ENCODE measurements at regions of chr7 and their contacts with region 1.

Region 1: GRCh38 chr7:121081327-121081936 is 92.9 kb downstream of the CPED1 start:
- DNase-seq: peak in 1 of 2 experiments; percentile 65
- H3K4me3 ChIP-seq: no peak overlapping the region
- H3K27ac ChIP-seq: no peak overlapping the region
- H3K4me1 ChIP-seq: peaks cover 42% of the 10 kb centered on the region
- H3K27me3 ChIP-seq: no peaks in the 10 kb centered on the region
- CTCF ChIP-seq: peak; percentile 76

Region 2: GRCh38 chr7:120792091-120792860 is 289.2 kb before region 1 on chr7:
- CTCF ChIA-PET with region 1: no interaction called
- POLR2A ChIA-PET with region 1: no interaction called
- intact Hi-C with region 1: loop called (anchors 1 kb)
- DNase-seq: peak in 1 of 2 experiments; percentile 57
- H3K4me3 ChIP-seq: no peak overlapping the region
- H3K27ac ChIP-seq: no peak overlapping the region
- H3K4me1 ChIP-seq: no peaks in the 10 kb centered on the region
- H3K27me3 ChIP-seq: no peaks in the 10 kb centered on the region
- CTCF ChIP-seq: peak; percentile 85

Region 3: GRCh38 chr7:120857588-120858573 is 223.6 kb before region 1 on chr7 and contains the start of gene TSPAN12:
- CTCF ChIA-PET with region 1: no interaction called
- POLR2A ChIA-PET with region 1: no interaction called
- intact Hi-C with region 1: loop called (anchors 5 kb)
- DNase-seq: peak; percentile 64 to 90
- H3K4me3 ChIP-seq: peak within 1 kb of the TSS; percentile 90
- H3K27ac ChIP-seq: peak within 1 kb of the TSS; percentile 45
- H3K4me1 ChIP-seq: peaks cover 14% of the 10 kb centered on the region
- H3K27me3 ChIP-seq: no peaks in the 10 kb centered on the region
- CTCF ChIP-seq: peak; percentile 64
- total RNA-seq, gene TSPAN12: 5.8 and 6.1 TPM in 2 replicates

Region 4: DNA sequence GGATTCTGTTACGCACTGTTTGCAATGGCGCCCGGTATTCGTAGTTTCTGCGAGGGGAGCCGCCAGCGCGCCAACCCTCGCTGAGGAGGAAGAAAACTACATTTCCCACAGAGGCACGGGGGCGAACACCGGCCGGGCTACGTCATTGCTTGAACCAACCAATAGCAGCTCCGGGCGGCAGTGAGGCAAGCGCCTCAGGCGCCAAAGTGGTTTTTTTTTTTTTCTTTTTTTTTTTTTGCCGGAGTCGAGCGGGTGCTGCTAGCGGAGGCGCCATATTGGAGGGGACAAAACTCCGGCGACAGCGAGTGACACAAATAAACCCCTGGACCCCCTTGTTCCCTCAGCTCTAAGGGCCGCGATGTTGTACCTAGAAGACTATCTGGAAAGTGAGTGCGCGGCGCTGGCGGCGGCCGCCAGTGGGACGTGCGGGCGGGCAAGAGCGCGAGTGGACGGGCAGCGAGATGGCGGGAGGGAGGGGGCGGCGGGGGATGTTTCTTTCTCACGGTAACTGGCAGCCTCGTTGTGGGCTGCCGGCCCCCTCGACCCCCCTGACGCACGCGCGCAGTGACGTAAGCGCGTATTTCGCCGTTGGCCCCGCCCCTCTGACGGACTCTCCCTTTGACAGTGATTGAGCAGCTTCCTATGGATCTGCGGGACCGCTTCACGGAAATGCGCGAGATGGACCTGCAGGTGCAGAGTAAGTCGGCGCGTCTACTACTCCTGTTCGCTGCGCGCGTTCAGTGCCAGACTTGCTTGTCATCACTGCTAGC is 130.7 kb before region 1 on chr7 and contains the start of gene ING3:
- CTCF ChIA-PET with region 1: no interaction called
- POLR2A ChIA-PET with region 1: interaction called, 4 read pairs
- intact Hi-C with region 1: loop called (anchors 2 kb)
- DNase-seq: peak; percentile 95 to 99
- H3K4me3 ChIP-seq: peak within 1 kb of the TSS; percentile 83
- H3K27ac ChIP-seq: peak within 1 kb of the TSS; percentile 93
- H3K4me1 ChIP-seq: peaks cover 24% of the 10 kb centered on the region
- H3K27me3 ChIP-seq: no peaks in the 10 kb centered on the region
- CTCF ChIP-seq: no peak
- total RNA-seq, gene ING3: 10.9 and 16.4 TPM in 2 replicates

Region 5: GRCh38 chr7:120987683-120988590 is 93.5 kb before region 1 on chr7:
- CTCF ChIA-PET with region 1: interaction called, 25 read pairs
- POLR2A ChIA-PET with region 1: no interaction called
- intact Hi-C with region 1: loop called (anchors 1 kb)
- DNase-seq: peak; percentile 74 to 85
- H3K4me3 ChIP-seq: peak overlapping the region; percentile 74
- H3K27ac ChIP-seq: no peak overlapping the region
- H3K4me1 ChIP-seq: peaks cover 10% of the 10 kb centered on the region
- H3K27me3 ChIP-seq: no peaks in the 10 kb centered on the region
- CTCF ChIP-seq: peak; percentile 95

Region 6: DNA sequence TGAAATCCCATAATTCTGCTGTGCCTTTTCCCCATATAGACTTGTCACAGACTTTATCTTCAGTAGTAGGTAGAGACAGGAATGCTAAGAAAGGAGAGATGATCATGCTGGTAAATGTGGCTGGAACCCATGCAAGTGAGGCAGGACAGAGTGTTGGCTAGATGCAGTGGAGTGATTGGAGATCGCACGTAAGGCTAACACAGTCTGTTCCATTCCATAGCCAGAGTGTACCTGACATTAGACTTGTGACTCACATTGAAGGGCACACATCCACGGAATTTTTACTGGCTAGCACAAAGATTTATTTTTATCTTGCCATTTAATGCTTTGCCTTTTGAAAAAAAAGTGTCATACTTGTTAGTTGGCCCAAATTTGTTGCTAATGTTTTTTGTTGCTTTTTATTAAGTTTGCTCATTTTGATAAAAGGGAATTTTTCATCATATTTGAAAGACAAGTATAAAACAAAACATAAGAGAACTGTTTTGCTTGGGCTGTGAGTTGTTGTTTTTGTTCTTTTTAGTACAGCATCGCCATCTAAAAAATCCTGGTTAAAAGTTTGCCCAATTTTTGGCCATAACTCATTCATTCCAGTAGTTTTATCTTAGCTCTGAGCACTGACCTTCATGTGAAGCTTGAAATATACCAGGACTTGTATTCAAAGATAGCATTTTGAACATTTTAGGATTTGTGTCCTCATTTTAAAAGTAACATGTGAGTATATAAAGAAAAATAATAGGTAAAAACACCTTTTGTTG is 11.9 kb before region 1 on chr7:
- CTCF ChIA-PET with region 1: interaction called, 3 read pairs
- POLR2A ChIA-PET with region 1: interaction called, 24 read pairs
- intact Hi-C with region 1: no loop called
- DNase-seq: no peak
- H3K4me3 ChIP-seq: no peak overlapping the region
- H3K27ac ChIP-seq: no peak overlapping the region
- H3K4me1 ChIP-seq: no peaks in the 10 kb centered on the region
- H3K27me3 ChIP-seq: no peaks in the 10 kb centered on the region
- CTCF ChIP-seq: no peak

Region 7: GRCh38 chr7:121102619-121103018 is 21.2 kb after region 1 on chr7:
- CTCF ChIA-PET with region 1: interaction called, 10 read pairs
- POLR2A ChIA-PET with region 1: interaction called, 7 read pairs
- intact Hi-C with region 1: loop called (anchors 1 kb)
- DNase-seq: peak; percentile 68 to 90
- H3K4me3 ChIP-seq: peak overlapping the region; percentile 31; the same call in 1 of the 2 replicates
- H3K27ac ChIP-seq: peak overlapping the region; percentile 83
- H3K4me1 ChIP-seq: peaks cover 24% of the 10 kb centered on the region
- H3K27me3 ChIP-seq: no peaks in the 10 kb centered on the region
- CTCF ChIP-seq: no peak

Measured in PC-9 (cell line).